Left ventricle myocardium inferior (tissue), 1 donor: ENCODE measurements at regions of chr14 and their contacts with region 1.

Region 1: DNA sequence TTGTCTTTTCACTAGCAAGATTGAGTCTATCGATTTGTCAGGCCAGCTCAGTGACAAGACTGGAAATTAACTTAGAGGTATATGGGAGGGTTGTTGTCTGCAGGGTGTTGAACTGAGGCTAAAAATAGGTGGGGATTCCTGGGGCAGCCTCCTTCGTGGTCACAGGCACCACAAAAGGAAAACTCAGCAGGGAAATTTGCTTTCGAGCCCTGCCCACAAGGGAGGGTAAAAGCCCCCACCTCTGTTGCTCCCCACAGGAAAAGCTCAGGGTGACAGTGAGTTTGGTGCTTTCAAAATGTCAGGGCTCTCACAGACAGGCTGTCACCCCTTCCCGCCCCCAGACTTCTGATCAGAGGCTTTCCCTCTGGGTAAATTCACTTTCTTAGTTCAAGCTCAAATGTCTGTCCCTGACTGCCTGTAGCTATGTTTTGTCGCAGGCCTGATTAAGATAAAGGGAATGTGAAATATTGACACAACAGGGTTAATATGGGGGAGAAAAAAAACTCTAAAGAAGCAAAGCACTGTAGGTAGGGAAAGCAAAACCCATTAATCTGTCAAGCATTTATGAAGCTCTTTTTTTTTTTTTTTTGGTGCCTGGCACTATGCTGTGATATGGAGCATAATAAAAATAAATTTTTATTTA is 11.7 kb upstream of the NFKBIA start:
- DNase-seq: no peak
- H3K4me3 ChIP-seq: no peak overlapping the region
- H3K27ac ChIP-seq: peak overlapping the region; percentile 78
- H3K4me1 ChIP-seq: peaks cover 48% of the 10 kb centered on the region
- H3K27me3 ChIP-seq: no peaks in the 10 kb centered on the region
- CTCF ChIP-seq: no peak

Region 2: GRCh38 chr14:35140718-35141581 is 275.3 kb before region 1 on chr14:
- intact Hi-C with region 1: loop called (anchors 5 kb)
- DNase-seq: no peak
- H3K4me3 ChIP-seq: no peak overlapping the region
- H3K27ac ChIP-seq: no peak overlapping the region
- H3K4me1 ChIP-seq: no peaks in the 10 kb centered on the region
- H3K27me3 ChIP-seq: no peaks in the 10 kb centered on the region
- CTCF ChIP-seq: peak; percentile 65

Region 3: GRCh38 chr14:35215110-35215876 is 200.9 kb before region 1 on chr14:
- intact Hi-C with region 1: loop called (anchors 5 kb)
- DNase-seq: no peak
- H3K4me3 ChIP-seq: no peak overlapping the region
- H3K27ac ChIP-seq: peak overlapping the region; percentile 6
- H3K4me1 ChIP-seq: no peaks in the 10 kb centered on the region
- H3K27me3 ChIP-seq: no peaks in the 10 kb centered on the region
- CTCF ChIP-seq: peak; percentile 68

Region 4: DNA sequence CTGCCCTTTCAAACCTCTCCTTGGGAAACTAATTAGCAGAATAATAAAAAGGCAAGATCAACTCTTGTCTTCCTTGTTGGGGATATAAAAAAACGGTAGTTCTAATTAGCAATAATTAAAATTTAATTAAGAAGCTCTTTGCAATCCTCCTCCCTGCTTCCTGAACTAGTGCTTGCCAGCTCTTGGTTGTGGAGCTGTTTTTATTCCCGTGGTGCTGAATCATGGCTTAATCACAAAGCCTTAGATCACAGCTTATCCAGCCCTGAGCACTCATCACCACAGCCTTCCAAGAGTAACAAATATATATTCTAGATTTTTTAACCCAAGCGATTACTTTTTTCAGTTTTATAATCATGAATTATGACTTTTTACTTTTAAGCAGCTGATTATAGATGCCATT is 54.5 kb after region 1 on chr14:
- intact Hi-C with region 1: no loop called
- DNase-seq: no peak
- H3K4me3 ChIP-seq: no peak overlapping the region
- H3K27ac ChIP-seq: no peak overlapping the region
- H3K4me1 ChIP-seq: no peaks in the 10 kb centered on the region
- H3K27me3 ChIP-seq: peaks cover 15% of the 10 kb centered on the region
- CTCF ChIP-seq: no peak